ENCODE measurements at regions of chr1 and their contacts with region 1.

Region 1: GRCh38 chr1:15323351-15323988 is 76.4 kb downstream of the FHAD1 start:
- DNase-seq: peak; percentile 76 to 90
- ATAC-seq: peak; percentile 94 to 99 (median 98)
- H3K4me3 ChIP-seq: no peak overlapping the region
- H3K4me3 Mint-ChIP-seq: no peak overlapping the region
- H3K27ac ChIP-seq: no peak overlapping the region
- H3K27ac Mint-ChIP-seq: peak overlapping the region in 1 of 2 donors; percentile 27
- H3K4me1 ChIP-seq: peaks cover 10% of the 10 kb centered on the region
- H3K4me1 Mint-ChIP-seq: peaks cover 11 to 25% of the 10 kb centered on the region in 2 donors
- H3K27me3 ChIP-seq: no peaks in the 10 kb centered on the region
- H3K27me3 Mint-ChIP-seq: no peaks in the 10 kb centered on the region
- CTCF ChIP-seq: peak; percentile 92

Region 2: DNA sequence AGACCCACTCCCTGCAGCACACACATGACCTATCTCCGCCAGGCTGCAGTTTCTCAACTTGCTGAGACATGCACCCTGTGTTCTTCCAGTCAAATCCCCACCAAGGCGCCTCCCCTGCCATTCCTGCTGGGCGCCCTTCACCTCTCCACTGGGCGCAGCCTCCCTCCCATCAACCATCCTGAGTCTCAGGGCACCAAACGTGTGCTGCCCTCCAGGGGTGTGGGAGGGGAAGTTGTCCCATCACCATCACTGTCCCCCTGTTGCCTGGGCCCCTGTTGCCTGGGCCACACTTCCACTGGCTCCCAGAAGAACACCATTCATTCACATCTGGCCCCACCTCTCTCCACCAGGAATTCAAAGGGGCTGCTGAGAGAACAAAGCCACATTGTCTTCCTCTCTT is 41.3 kb after region 1 on chr1:
- intact Hi-C with region 1: loop called (anchors 1 kb)
- DNase-seq: peak in 1 of 2 donors; percentile 49
- ATAC-seq: peak; percentile 48 to 74 (median 72)
- H3K4me3 ChIP-seq: no peak overlapping the region
- H3K4me3 Mint-ChIP-seq: no peak overlapping the region
- H3K27ac ChIP-seq: no peak overlapping the region
- H3K27ac Mint-ChIP-seq: no peak overlapping the region
- H3K4me1 ChIP-seq: peaks cover 2% of the 10 kb centered on the region
- H3K4me1 Mint-ChIP-seq: peaks cover 24 to 31% of the 10 kb centered on the region in 2 donors
- H3K27me3 ChIP-seq: no peaks in the 10 kb centered on the region
- H3K27me3 Mint-ChIP-seq: peaks cover 0 to 5% of the 10 kb centered on the region in 2 donors
- CTCF ChIP-seq: no peak

Region 3: DNA sequence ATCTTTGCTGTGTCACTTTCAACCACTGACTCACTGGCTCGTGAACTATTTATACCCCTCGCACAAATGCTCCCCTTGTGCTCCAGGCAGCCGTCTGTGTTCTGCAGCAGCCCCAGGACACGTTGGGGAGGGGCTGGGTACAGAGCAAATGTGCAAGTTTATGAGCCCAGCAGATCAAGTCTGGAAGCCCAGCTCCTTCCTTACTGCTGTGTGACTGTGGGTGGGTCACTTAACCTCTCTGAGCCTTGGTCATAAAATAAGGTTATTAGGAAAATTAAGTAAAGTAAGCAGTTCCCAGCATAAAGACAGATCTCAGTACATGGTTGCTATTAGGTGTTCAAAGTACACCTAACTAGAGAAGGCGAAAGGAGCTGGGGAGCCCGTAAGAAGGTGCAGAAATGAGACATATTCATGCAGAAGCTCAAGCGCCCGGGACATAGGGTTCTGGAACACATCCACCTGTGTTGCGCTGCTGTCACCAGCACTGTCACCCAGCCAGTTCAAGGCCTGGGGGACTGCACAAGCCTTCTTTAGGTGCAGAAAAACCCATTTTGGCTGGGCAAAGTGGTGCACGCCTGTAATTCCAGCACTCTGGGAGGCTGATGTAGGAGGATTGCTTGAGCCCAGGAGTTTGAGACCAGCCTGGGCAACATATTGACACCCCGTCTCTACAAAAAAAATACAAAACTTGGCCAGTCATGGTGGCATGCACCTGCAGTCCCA is 100.0 kb after region 1 on chr1:
- intact Hi-C with region 1: loop called (anchors 2 kb)
- DNase-seq: no peak
- ATAC-seq: peak in 1 of 3 donors; percentile 7
- H3K4me3 ChIP-seq: no peak overlapping the region
- H3K4me3 Mint-ChIP-seq: peak overlapping the region; percentile 83
- H3K27ac ChIP-seq: peak overlapping the region; percentile 38
- H3K27ac Mint-ChIP-seq: peak overlapping the region; percentile 93 to 100
- H3K4me1 ChIP-seq: peaks cover 90% of the 10 kb centered on the region
- H3K4me1 Mint-ChIP-seq: peaks cover 69 to 91% of the 10 kb centered on the region in 2 donors
- H3K27me3 ChIP-seq: no peaks in the 10 kb centered on the region
- H3K27me3 Mint-ChIP-seq: no peaks in the 10 kb centered on the region
- CTCF ChIP-seq: no peak

Region 4: GRCh38 chr1:15430787-15431570 is 107.5 kb after region 1 on chr1:
- intact Hi-C with region 1: loop called (anchors 1 kb)
- DNase-seq: peak; percentile 84
- ATAC-seq: peak; percentile 51 to 76 (median 57)
- H3K4me3 ChIP-seq: no peak overlapping the region
- H3K4me3 Mint-ChIP-seq: peak overlapping the region; percentile 45
- H3K27ac ChIP-seq: peak overlapping the region; percentile 52
- H3K27ac Mint-ChIP-seq: peak overlapping the region; percentile 88 to 93
- H3K4me1 ChIP-seq: peaks cover 51% of the 10 kb centered on the region
- H3K4me1 Mint-ChIP-seq: peaks cover 45 to 68% of the 10 kb centered on the region in 2 donors
- H3K27me3 ChIP-seq: no peaks in the 10 kb centered on the region
- H3K27me3 Mint-ChIP-seq: no peaks in the 10 kb centered on the region
- CTCF ChIP-seq: peak; percentile 96

Region 5: DNA sequence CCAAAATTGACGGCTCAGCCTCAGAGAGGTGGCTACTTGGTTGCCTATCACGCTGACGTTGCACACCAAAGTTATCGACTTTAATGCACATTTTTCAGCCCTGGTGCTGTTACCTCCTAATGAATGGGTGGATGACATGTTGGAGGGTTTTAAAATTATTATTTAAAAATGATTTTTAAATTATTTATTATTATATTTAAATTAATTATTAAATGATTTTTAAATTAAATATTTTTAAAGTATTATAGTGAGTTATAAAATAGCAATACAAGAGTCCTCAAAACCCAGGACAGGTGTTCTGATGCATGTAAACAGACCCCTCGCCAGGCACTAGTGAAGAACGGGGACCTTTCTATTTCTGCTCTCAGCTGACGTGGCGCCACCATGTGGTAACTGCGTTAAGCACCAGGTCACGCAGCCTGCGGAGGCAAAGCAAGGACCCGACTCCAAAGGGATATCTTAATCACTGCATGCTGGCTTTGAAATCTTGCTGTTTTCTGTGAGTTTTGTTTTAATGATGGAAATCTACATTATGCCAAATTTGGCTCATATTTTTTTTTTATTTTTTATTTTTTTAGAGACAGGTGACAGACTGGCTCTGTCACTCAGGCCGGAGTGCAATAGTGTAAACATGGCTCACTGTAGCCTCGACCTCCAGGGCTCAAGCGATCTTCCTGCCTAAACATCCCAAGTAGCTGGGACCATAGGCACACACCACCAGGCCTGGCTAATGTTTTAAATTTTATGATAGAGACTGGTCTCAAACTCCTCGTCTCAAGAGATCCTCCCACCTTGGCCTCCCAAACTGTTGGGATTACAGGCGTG is 177.9 kb after region 1 on chr1:
- intact Hi-C with region 1: loop called (anchors 2 kb)
- DNase-seq: peak; percentile 41 to 64
- ATAC-seq: peak; percentile 58 to 77 (median 71)
- H3K4me3 ChIP-seq: no peak overlapping the region
- H3K4me3 Mint-ChIP-seq: no peak overlapping the region
- H3K27ac ChIP-seq: no peak overlapping the region
- H3K27ac Mint-ChIP-seq: peak overlapping the region in 1 of 2 donors; percentile 33
- H3K4me1 ChIP-seq: no peaks in the 10 kb centered on the region
- H3K4me1 Mint-ChIP-seq: no peaks in the 10 kb centered on the region
- H3K27me3 ChIP-seq: no peaks in the 10 kb centered on the region
- H3K27me3 Mint-ChIP-seq: no peaks in the 10 kb centered on the region
- CTCF ChIP-seq: peak; percentile 62